A673 (cell line): ENCODE measurements at regions of chrX and their contacts with region 1.

Region 1: GRCh38 chrX:36908801-36909676 is 99.1 kb upstream of the FAM47C start:
- DNase-seq: peak; percentile 73
- H3K4me3 ChIP-seq: no peak overlapping the region
- H3K27ac ChIP-seq: no peak overlapping the region
- H3K4me1 ChIP-seq: no peaks in the 10 kb centered on the region
- H3K27me3 ChIP-seq: no peaks in the 10 kb centered on the region
- CTCF ChIP-seq: peak; percentile 84

Region 2: DNA sequence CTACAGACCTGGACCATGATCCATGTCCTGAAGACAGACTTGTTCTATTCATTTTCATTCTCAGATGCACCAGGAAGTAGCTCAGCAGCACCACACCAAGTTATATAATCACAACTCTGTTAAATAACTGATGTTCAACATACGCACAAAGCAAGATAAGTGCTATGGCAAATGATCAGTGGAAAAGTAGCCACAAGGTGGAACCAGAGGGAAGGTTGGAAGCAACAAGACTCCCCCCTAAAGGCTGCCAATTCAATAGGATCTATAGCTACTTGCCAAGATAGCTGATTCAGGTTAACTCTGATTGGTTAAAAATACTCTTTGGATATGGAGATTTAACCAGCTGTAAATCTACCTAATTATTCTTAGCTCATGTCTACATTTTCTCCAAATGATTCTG is 1990.2 kb before region 1 on chrX:
- CTCF ChIA-PET with region 1: no interaction called
- POLR2A ChIA-PET with region 1: no interaction called
- intact Hi-C with region 1: loop called (anchors 10 kb)
- DNase-seq: peak; percentile 82
- H3K4me3 ChIP-seq: no peak overlapping the region
- H3K27ac ChIP-seq: no peak overlapping the region
- H3K4me1 ChIP-seq: peaks cover 3% of the 10 kb centered on the region
- H3K27me3 ChIP-seq: no peaks in the 10 kb centered on the region
- CTCF ChIP-seq: peak; percentile 72